Adrenal gland (tissue), 19 donors: ENCODE measurements at regions of chr12 and their contacts with region 1.

Region 1: DNA sequence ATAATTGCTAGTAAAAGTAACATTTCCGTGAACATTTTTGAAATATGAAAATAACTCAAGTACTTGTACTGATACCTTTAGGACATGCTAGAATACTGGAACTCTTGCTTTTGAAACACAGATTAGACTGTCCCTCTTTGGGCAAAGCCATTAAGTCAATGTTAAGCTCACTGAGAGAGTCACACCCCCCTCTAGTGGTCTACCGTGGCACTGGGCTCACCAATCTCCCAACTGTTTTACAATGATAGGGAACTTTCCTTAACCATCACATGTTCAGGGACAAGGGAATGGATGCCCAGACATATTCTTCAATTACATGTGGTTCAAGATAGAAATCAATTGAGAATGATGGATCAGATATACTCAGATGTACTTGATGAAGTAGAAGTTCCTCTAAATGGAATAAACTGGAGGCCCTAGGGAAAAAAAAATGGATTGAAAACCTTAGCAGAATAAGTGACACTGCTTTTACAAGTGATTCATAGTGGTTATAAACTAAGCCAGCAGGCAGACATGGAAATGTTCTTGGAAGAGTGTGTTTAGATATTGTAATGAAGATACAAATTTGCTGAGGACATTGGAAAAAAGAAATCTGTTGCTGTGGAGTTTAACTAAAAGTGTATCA is 17.8 kb downstream of the NANOG start:
- DNase-seq: peak; percentile 76 to 93 (median 82)
- H3K4me3 ChIP-seq: no peak overlapping the region
- H3K27ac ChIP-seq: no peak overlapping the region
- H3K4me1 ChIP-seq: peaks cover 0 to 8% of the 10 kb centered on the region in 2 donors
- H3K27me3 ChIP-seq: no peaks in the 10 kb centered on the region
- CTCF ChIP-seq: peak; percentile 78 to 96 (median 90)
- POLR2A ChIP-seq: no peak

Region 2: DNA sequence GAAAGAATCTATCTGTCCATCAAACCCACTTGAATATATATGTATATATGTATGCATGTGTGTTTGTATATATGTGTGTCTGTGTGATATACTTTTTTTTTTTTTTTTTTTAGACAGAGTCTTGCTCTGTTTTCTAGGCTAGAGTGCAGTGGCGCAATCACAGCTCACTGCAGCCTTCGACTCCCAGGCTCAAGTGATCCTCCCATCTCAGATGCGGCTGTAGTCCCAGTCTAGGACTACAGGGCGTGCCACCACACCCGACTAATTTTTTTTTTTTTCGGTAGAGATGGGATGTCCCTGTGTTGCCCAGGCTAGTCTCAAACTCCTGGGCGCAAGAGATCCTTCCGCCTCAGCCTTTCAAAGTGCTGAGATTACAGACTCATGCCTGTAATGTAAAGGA is 128.2 kb before region 1 on chr12:
- intact Hi-C with region 1: loop called (anchors 5 to 10 kb)
- DNase-seq: peak in 1 of 7 donors; percentile 9
- H3K4me3 ChIP-seq: no peak overlapping the region
- H3K27ac ChIP-seq: no peak overlapping the region
- H3K4me1 ChIP-seq: peaks cover 0 to 4% of the 10 kb centered on the region in 2 donors
- H3K27me3 ChIP-seq: no peaks in the 10 kb centered on the region
- CTCF ChIP-seq: no peak
- POLR2A ChIP-seq: no peak